Activated T-helper 2 cell treated with anti-CD3 and anti-CD28 coated beads, Interferon-gamma antibody, Interleukin-2, Interleukin-4, amounts not matched to agents 10 μg/mL and 5 μg/mL and 100 μg/mL, durations not matched to agents 14 hours and 24 hours and 36 hours (primary cell): ENCODE measurements at regions of chr18 and their contacts with region 1.

Region 1: DNA sequence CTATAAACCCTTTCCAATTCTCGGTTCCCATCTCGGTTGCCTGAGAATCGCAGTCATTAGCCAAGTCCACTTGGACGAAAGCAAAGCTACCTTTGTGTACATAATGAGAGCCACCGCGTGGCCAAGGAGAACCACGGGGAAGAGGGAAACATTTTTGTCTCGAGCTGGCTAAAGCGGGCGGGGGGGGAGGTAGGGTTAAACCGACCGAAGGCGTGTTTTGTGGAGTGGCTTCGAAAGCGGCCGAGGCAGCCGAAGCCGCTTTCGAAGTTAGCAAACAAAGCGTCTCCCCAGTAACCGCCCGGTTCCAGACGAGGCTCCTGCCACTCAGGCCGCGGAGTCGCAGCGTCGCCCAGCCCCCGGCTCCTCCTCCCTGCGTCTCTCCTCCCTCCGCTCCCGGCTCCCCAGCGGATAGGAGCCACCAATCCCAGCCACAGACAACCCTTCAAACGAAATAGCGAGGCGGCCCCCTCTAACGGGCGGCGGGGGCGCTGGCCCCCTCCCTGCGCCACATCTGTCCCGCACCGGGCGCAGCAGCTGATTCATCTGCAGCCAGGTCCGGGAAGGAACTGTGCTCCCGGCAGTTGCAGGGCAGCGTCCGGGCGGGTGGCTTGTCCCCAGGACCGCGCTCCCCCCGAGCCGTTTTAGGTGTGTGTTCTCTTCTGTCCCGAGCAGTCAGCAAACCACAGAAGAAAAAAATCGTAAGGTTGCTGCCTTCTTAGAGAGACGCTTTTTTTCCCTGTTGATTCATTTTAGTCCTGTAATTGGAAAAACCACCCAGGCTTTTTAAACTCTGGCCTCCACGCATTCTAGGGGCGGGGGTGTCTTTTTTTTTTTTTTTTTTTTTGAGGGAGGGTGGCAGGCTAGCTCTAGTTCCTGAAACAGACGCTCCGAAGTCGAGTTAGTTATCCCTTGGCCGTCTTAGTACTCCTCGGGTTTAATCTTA is 1.8 kb upstream of the TGIF1 start:
- DNase-seq: peak; percentile 84
- H3K4me3 Mint-ChIP-seq: peak overlapping the region; percentile 89
- H3K27ac Mint-ChIP-seq: peak overlapping the region; percentile 97
- H3K4me1 Mint-ChIP-seq: peaks cover 22% of the 10 kb centered on the region
- H3K27me3 Mint-ChIP-seq: no peaks in the 10 kb centered on the region

Region 2: DNA sequence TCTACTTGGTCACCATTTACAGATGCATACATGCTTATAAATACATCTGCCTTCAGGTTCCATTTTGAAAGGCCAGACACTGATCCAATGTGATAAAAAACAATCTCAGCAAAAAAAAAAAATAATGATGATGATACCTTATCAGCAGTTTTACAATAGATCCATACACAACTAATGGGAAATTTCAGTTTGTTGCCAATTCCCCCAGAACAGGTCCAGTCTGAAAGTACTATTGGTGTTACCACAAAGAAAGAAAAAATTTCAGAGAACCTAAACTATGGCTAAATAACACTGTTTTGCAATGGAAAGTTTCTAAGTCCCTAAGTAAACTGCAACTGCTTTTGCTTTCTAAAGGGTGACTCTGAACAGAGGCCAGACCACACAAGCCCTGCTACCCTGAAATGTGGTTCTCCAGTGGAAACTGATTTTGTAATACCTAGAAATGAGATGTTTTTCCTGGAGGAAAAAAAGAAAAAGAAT is 489.3 kb before region 1 on chr18:
- intact Hi-C with region 1: loop called (anchors 5 kb)
- DNase-seq: no peak
- H3K4me3 Mint-ChIP-seq: peak overlapping the region; percentile 40
- H3K27ac Mint-ChIP-seq: peak overlapping the region; percentile 99
- H3K4me1 Mint-ChIP-seq: peaks cover 84% of the 10 kb centered on the region
- H3K27me3 Mint-ChIP-seq: no peaks in the 10 kb centered on the region

Region 3: GRCh38 chr18:3245853-3246634 is 202.1 kb before region 1 on chr18:
- intact Hi-C with region 1: loop called (anchors 1 kb)
- DNase-seq: peak; percentile 79
- H3K4me3 Mint-ChIP-seq: peak overlapping the region; percentile 90
- H3K27ac Mint-ChIP-seq: peak overlapping the region; percentile 92
- H3K4me1 Mint-ChIP-seq: peaks cover 32% of the 10 kb centered on the region
- H3K27me3 Mint-ChIP-seq: no peaks in the 10 kb centered on the region

Region 4: DNA sequence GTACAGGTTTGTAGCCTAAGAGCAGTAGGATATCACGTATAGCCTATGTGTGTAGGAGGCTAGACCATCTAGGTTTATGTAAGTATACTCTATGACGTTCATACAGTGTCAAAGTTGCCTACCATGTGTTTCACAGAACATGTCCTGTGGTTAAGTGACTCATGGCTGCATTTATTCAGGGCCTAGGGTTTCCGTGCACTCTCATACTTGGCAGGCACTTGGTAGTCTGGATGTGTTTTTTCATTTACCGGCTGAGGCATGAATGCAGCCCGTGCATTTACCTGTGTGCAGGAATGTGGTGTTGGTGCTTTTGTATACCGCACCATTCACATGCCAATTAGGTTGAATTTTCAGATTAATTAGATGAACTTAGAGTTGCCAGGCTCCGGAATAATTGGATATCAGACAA is 142.8 kb before region 1 on chr18:
- intact Hi-C with region 1: loop called (anchors 1 kb)
- DNase-seq: peak; percentile 39
- H3K4me3 Mint-ChIP-seq: peak overlapping the region; percentile 20
- H3K27ac Mint-ChIP-seq: peak overlapping the region; percentile 99
- H3K4me1 Mint-ChIP-seq: peaks cover 22% of the 10 kb centered on the region
- H3K27me3 Mint-ChIP-seq: peaks cover 22% of the 10 kb centered on the region

Region 5: GRCh38 chr18:3525870-3526420 is 77.8 kb after region 1 on chr18:
- intact Hi-C with region 1: no loop called
- DNase-seq: peak; percentile 45
- H3K4me3 Mint-ChIP-seq: no peak overlapping the region
- H3K27ac Mint-ChIP-seq: peak overlapping the region; percentile 39
- H3K4me1 Mint-ChIP-seq: peaks cover 16% of the 10 kb centered on the region
- H3K27me3 Mint-ChIP-seq: peaks cover 6% of the 10 kb centered on the region

Region 6: DNA sequence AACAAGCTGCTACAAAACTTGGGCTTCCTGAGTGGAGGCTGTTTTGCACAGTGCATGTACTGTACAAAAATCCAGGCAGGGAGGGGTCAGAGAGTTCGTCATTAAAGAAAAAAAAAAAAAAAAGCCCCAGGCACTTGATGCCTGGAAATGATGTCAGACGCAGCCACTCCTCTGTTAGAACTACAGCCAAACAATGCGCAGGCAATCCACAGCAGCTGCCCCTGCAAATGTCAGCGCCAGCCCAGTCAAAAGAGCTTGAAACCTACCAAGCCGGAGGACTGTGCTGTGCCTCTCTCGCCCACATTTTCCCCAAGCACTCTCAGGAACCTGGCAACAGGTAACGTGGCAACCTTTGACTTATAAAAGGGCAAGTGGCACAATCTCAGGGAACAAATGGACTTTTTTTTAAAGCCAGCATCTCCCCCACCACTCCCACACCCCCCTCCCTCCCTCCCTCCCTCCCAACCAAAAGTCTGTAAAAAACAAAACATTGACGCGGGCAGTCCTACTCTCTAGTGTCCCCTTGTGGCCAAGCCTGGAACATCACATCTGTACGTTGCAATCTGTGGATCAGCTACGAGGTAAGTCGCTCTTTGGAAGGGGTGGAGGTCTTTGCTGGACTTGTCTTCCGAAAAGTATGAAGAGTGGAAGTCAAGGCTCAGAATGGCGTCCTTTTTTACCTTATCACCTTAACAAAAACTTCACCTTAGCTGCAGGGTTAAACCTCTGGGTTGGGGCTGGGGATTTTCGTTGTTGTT is 145.9 kb after region 1 on chr18:
- intact Hi-C with region 1: loop called (anchors 1 kb)
- DNase-seq: peak; percentile 84
- H3K4me3 Mint-ChIP-seq: peak overlapping the region; percentile 88
- H3K27ac Mint-ChIP-seq: peak overlapping the region; percentile 98
- H3K4me1 Mint-ChIP-seq: peaks cover 49% of the 10 kb centered on the region
- H3K27me3 Mint-ChIP-seq: no peaks in the 10 kb centered on the region

Region 7: GRCh38 chr18:3728704-3729437 is 280.7 kb after region 1 on chr18:
- intact Hi-C with region 1: no loop called
- DNase-seq: no peak
- H3K4me3 Mint-ChIP-seq: no peak overlapping the region
- H3K27ac Mint-ChIP-seq: no peak overlapping the region
- H3K4me1 Mint-ChIP-seq: no peaks in the 10 kb centered on the region
- H3K27me3 Mint-ChIP-seq: peaks cover 9% of the 10 kb centered on the region

Region 8: GRCh38 chr18:5295981-5296705 is 1848.0 kb after region 1 on chr18:
- intact Hi-C with region 1: loop called (anchors 5 kb)
- DNase-seq: peak; percentile 92
- H3K4me3 Mint-ChIP-seq: peak overlapping the region; percentile 97
- H3K27ac Mint-ChIP-seq: peak overlapping the region; percentile 99
- H3K4me1 Mint-ChIP-seq: peaks cover 17% of the 10 kb centered on the region
- H3K27me3 Mint-ChIP-seq: peaks cover 11% of the 10 kb centered on the region